Activated naive CD4-positive, alpha-beta T cell treated with anti-CD3 and anti-CD28 coated beads for 36 hours (primary cell): ENCODE measurements at regions of chr12 and their contacts with region 1.

Region 1: DNA sequence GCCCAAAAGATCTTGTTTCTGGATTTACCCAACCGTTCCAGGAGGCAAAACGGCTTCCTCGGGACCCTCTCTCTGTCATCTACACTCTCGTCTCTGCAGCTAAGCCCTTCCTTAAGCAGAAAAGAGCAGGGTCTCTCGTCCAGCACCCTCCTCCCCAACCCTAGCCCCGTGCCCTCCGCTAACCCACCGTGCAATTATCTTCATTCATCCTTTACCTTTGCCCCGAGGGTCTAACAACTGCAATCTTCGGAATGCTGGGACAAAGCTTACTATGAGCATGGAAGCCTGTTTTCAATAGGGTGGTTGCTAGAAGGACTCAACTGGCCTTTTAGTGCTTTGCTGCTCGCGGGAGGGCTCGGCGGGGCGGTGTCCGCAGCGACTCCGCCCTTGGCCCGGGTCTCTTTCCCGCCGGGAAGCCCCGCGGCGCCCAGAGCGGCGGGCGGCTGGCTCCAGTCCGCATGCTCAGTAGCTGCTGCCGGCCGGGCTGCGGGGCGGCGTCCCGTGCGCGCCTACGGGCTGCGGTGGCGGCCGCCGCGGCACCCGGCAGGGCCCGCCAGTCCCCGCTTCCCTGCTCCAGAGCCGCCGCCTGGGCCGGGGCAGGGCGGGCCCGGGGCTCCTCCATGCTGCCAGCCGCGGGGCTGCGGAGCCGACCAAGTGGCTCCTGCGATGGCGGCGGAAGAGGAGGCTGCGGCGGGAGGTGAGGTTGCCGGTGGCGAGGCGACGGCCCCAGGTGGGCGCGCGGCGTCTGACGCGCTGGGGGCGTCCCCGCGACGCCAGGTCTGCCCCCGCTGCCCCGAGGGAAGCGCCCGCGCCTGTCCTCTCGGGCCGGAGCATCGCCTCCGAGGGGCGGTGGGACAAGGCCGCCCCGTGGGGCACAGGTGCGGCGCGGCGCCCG is at the start of gene BMAL2:
- DNase-seq: peak; percentile 44
- H3K4me3 Mint-ChIP-seq: peak within 1 kb of the TSS; percentile 90
- H3K27ac Mint-ChIP-seq: peak within 1 kb of the TSS; percentile 74
- H3K4me1 Mint-ChIP-seq: peaks cover 34% of the 10 kb centered on the region
- H3K27me3 Mint-ChIP-seq: peaks cover 30% of the 10 kb centered on the region
- total RNA-seq, gene BMAL2: 7.9 to 9.2 TPM

Region 2: GRCh38 chr12:26704684-26705460 is 627.8 kb before region 1 on chr12:
- CTCF ChIA-PET with region 1: no interaction called
- intact Hi-C with region 1: no loop called
- DNase-seq: no peak
- H3K4me3 Mint-ChIP-seq: no peak overlapping the region
- H3K27ac Mint-ChIP-seq: no peak overlapping the region
- H3K4me1 Mint-ChIP-seq: no peaks in the 10 kb centered on the region
- H3K27me3 Mint-ChIP-seq: no peaks in the 10 kb centered on the region

Region 3: DNA sequence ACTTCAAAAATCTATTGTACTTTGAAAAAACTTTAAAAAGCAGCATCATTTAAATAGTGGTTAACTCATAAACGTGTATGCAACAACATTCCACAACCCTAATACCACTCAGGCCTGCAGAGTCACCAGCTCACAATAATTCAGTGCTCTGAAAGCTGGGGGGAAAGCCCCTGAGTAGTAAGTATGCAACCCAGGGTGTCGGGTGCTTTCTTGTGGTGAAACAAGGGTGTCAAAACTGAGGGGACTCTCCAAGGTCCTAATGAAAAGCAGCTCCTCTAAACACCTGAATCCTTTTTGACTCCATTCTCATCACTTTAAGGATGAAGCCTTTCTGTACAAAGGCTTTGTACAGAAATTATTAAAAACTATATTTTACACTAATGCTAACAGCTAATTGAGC is 360.7 kb before region 1 on chr12:
- CTCF ChIA-PET with region 1: no interaction called
- intact Hi-C with region 1: loop called (anchors 1 kb)
- DNase-seq: peak; percentile 92
- H3K4me3 Mint-ChIP-seq: no peak overlapping the region
- H3K27ac Mint-ChIP-seq: no peak overlapping the region
- H3K4me1 Mint-ChIP-seq: peaks cover 9% of the 10 kb centered on the region
- H3K27me3 Mint-ChIP-seq: no peaks in the 10 kb centered on the region

Region 4: DNA sequence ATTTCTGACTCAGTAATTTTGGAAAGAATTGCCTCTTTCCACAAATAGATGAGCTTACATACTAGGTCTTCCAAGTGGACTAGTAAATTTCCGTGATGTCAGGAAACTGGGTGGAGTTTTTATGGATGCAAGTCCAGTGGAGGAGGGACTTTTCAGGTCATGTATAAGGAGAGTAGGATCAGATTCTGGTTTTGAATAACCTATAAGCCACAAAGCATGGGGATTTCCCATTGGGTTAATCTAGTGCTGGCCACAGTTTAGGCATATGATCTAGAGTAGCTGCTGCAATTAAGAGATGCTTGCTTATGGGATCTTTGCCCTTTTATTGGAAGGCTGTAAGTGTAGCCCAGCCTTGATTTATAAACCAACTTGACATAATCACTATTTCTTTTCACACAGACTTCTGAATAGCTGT is 54.8 kb before region 1 on chr12:
- CTCF ChIA-PET with region 1: no interaction called
- intact Hi-C with region 1: loop called (anchors 1 kb)
- DNase-seq: peak; percentile 34
- H3K4me3 Mint-ChIP-seq: no peak overlapping the region
- H3K27ac Mint-ChIP-seq: no peak overlapping the region
- H3K4me1 Mint-ChIP-seq: peaks cover 33% of the 10 kb centered on the region
- H3K27me3 Mint-ChIP-seq: no peaks in the 10 kb centered on the region

Region 5: DNA sequence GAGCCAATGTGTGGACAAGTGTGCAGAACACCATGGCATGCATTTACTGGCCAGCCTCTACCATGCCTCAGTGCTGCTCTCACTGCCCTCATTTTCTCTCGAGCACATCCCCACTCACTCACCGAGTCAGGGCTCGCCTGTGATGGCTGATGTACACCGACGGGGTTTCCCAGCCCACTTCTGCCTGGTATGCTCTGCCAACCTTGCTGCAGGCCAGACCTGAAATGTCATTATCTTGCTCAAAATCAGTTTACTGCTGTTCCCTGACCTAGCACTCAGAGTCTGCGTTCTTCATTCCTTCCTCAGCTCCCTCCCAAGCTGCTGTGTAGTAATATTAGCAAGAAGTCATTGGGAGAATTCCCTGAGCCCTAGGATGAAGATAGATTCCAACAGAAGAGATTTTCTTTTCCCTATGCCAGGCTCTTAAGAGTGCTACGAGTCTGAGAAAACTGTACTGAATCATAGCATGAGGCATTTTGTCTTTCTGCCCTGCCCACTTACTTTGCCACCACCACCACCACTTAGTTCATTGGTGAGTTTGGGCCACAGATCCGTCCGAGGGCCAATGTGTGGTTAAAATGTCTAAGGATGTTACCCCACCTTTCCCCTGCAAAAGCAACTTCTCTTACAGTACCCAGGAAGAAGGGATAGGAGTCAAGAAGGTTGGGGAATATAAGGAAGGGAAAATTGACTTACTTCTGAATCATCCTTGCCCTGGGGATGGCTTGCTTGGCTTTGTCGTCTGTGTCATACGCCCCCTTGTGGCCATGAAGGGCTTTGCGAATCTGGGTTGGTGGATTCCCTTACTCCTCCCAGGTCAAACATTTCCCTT is 51.0 kb after region 1 on chr12:
- CTCF ChIA-PET with region 1: interaction called, 3 read pairs
- intact Hi-C with region 1: loop called (anchors 1 kb)
- DNase-seq: peak; percentile 84
- H3K4me3 Mint-ChIP-seq: no peak overlapping the region
- H3K27ac Mint-ChIP-seq: no peak overlapping the region
- H3K4me1 Mint-ChIP-seq: no peaks in the 10 kb centered on the region
- H3K27me3 Mint-ChIP-seq: peaks cover 4% of the 10 kb centered on the region

Region 6: GRCh38 chr12:27424631-27425230 is 92.1 kb after region 1 on chr12:
- CTCF ChIA-PET with region 1: no interaction called
- intact Hi-C with region 1: no loop called
- DNase-seq: no peak
- H3K4me3 Mint-ChIP-seq: no peak overlapping the region
- H3K27ac Mint-ChIP-seq: no peak overlapping the region
- H3K4me1 Mint-ChIP-seq: no peaks in the 10 kb centered on the region
- H3K27me3 Mint-ChIP-seq: no peaks in the 10 kb centered on the region